GM10248 (cell line): ENCODE measurements at regions of chr2 and their contacts with region 1.

Region 1: DNA sequence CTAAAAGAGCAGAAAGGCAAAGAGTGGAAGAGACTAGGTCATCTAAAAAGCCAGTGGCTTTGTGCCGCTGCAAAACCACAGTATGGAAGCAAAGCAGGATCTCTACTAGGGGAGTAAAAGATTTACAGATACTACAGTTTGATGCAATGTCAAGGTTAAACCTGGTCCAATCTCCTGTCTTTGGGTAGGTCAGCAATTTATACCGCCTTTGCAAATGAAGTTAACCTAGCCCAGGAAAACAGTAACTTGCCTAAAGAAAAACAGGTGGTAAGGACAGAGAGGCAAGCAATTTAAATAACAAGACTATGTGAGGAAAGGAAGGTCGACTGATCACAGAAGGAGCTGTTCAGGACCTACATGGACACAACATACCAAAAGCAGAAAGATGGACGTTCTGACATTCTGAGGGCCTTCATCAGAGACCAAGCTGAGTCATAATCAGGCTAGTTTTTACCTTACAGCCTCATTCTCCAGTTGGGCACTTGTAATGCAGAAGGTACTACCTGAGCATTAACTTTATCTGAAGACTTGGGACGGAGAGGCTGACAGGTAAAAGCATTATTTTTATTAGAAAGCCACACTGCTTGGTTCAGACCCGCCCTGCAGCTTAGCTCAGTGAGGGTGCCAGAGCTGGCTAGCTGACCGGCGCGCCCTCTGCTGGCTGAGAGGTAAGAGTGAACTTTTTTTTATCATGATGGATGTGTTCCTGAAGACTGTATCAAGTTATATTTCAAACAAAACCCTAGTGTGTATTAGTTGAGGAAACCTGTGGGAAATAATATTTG is 15.9 kb downstream of the CDKL4 start:
- DNase-seq: peak; percentile 70
- CTCF ChIP-seq: peak; percentile 70

Region 2: GRCh38 chr2:38947240-38948239 is 280.3 kb before region 1 on chr2:
- CTCF ChIA-PET with region 1: interaction called, 238 read pairs
- POLR2A ChIA-PET with region 1: no interaction called
- DNase-seq: peak; percentile 75
- CTCF ChIP-seq: peak; percentile 75

Region 3: DNA sequence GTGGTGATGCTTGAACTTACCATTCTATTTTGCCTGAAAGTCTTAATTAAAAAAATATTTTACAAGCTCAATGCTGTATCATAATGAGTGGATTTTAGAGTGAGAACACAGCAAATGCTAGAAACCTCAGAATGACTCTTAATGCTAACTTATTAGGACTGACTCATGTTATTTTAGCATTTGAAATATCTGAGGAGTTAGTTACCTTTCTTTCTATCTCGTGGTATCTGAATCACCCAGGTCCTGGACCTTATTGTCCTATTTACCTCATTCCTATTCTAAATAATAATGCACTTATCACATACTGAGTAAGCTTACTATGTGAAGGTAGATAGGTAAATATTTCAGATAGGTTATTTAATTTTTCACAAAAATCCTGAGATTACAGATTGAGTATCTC is 177.7 kb before region 1 on chr2:
- CTCF ChIA-PET with region 1: interaction called, 289 read pairs
- POLR2A ChIA-PET with region 1: no interaction called
- DNase-seq: no peak
- CTCF ChIP-seq: no peak

Region 4: GRCh38 chr2:39094852-39095306 is 132.9 kb before region 1 on chr2:
- CTCF ChIA-PET with region 1: interaction called, 27 read pairs
- POLR2A ChIA-PET with region 1: no interaction called
- DNase-seq: peak; percentile 53
- CTCF ChIP-seq: no peak

Region 5: DNA sequence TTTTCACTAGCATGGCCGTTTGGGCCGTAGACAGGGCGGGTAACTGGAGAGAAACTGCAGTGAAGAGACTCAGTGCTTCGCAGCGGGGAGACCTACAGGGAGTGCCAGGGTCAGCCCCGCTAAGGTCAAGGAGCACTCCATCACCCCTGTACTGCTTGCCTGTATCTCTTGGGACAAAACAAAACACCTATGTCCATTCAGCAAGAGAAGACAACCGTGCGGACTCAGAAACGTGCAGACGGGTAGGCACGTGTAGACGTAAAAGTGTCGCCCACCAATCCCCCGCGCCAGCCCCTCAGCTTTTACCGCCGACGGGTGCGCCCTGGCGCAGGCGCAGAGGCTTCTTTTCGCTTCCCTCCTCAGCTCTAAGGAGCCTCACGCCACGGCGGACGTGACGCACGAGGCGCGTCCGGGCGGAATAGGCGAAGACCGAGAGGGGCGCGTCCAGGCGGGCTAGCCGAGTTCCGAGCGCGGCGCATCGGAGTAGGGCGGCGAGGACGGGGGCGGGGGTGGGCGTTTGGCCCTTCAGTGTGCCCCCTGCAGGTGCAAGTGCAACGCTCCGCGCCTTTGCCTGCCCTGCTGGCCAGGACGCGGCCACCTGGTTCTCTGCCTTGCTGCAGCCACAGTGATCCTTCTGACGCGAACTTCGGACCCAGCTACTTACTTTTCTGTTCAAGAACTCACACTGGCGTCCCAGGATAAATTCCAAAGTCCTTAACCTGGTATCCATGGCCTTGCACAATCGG is 103.6 kb before region 1 on chr2:
- CTCF ChIA-PET with region 1: interaction called, 32 read pairs
- POLR2A ChIA-PET with region 1: no interaction called
- DNase-seq: peak; percentile 90
- CTCF ChIP-seq: peak; percentile 61

Region 6: GRCh38 chr2:39217192-39217550 is 10.6 kb before region 1 on chr2:
- CTCF ChIA-PET with region 1: interaction called, 13 read pairs
- POLR2A ChIA-PET with region 1: no interaction called
- DNase-seq: no peak
- CTCF ChIP-seq: no peak